ENCODE measurements at regions of chr20 and their contacts with region 1.

Region 1: GRCh38 chr20:10660661-10661060 is 13.1 kb downstream of the JAG1 start:
- DNase-seq: no peak
- ATAC-seq: no peak
- H3K4me3 ChIP-seq: no peak overlapping the region
- H3K27ac ChIP-seq: peak overlapping the region; percentile 46 to 58
- H3K4me1 ChIP-seq: peaks cover 4 to 22% of the 10 kb centered on the region in 2 donors
- H3K27me3 ChIP-seq: no peaks in the 10 kb centered on the region

Region 2: GRCh38 chr20:10609276-10610169 is 51.1 kb before region 1 on chr20:
- intact Hi-C with region 1: loop called in 1 of 2 experiments (anchors 5 kb)
- DNase-seq: peak; percentile 74 to 75
- ATAC-seq: peak; percentile 67
- H3K4me3 ChIP-seq: no peak overlapping the region
- H3K27ac ChIP-seq: peak overlapping the region; percentile 79 to 100
- H3K4me1 ChIP-seq: peaks cover 3 to 10% of the 10 kb centered on the region in 2 donors
- H3K27me3 ChIP-seq: no peaks in the 10 kb centered on the region